ENCODE measurements at regions of chr11 and their contacts with region 1.

Region 1: GRCh38 chr11:7688238-7688826 is 15.0 kb upstream of the CYB5R2 start:
- DNase-seq: peak in 1 of 2 donors; percentile 68
- H3K4me3 ChIP-seq: no peak overlapping the region
- H3K27ac ChIP-seq: no peak overlapping the region
- H3K4me1 ChIP-seq: no peaks in the 10 kb centered on the region
- H3K27me3 ChIP-seq: no peaks in the 10 kb centered on the region
- CTCF ChIP-seq: peak in 5 of 7 experiments; percentile 44 to 89 (median 81)
- EP300 ChIP-seq: no peak
- POLR2A ChIP-seq: no peak

Region 2: DNA sequence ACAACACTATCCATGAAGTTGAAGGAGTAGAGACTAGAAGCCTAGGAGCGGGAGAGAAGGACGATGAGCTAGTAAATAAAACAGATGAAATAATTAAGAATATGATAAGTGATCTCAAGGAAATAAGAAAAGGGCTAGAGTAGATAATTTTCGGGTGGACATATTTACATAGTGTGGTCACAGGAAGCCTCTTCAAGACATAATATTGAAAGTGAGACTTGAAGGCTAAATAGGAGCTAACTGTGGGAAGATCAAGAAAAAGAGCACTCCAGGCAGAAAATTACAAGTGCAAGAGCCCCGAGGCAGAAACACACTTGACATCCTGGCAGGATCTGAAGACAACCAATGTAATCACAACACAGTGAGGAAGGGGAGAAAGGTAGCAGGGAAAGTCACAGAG is 186.4 kb before region 1 on chr11:
- intact Hi-C with region 1: loop called (anchors 10 kb)
- DNase-seq: no peak
- H3K4me3 ChIP-seq: no peak overlapping the region
- H3K27ac ChIP-seq: no peak overlapping the region
- H3K4me1 ChIP-seq: no peaks in the 10 kb centered on the region
- H3K27me3 ChIP-seq: no peaks in the 10 kb centered on the region
- CTCF ChIP-seq: no peak
- EP300 ChIP-seq: no peak
- POLR2A ChIP-seq: no peak

Region 3: DNA sequence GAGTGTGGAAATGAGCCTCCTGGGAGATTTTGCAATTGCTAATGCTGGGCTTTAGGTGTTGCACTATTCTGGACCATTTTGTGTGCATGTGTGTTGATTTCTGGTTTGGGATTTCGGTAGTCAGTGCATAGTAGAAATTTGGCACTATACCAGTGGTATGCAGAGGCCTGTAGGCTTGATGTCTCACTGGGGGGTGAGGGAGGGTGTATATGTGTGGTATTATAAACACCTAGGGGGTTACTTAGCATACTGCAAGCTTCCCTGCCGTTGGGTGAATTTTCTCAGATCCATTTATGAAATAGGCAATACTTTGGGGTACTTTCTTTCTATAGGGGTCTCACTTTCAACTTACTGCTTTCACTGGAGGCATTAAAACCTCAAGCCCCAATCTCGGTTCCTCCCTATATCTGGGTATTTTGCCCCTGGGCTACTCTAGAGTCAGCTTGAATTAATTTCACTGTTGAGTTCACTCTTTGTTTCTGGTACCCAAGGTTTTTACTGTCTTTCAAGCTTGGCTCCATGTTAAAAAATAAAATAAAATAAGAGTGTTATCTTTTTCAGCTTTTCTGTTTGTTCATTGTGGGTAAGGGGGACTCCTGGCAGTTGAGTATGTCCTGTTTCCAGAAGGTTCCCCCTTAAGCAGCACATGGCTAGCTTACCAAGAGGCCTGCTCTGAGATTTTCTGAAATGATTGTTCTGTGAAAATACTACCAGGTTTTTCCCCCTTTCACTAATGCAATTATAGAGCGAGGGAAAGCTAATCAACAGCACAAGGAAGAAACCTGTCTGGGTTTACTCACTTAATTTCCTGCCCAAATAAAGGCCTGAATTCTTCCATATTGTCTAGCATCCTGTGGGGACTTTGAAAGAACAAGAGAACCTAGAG is 128.7 kb before region 1 on chr11:
- intact Hi-C with region 1: loop called (anchors 10 kb)
- DNase-seq: no peak
- H3K4me3 ChIP-seq: no peak overlapping the region
- H3K27ac ChIP-seq: no peak overlapping the region
- H3K4me1 ChIP-seq: peaks cover under 1 to 16% (median 9%) of the 10 kb centered on the region in 4 donors
- H3K27me3 ChIP-seq: no peaks in the 10 kb centered on the region
- CTCF ChIP-seq: no peak
- EP300 ChIP-seq: no peak
- POLR2A ChIP-seq: no peak

Region 4: GRCh38 chr11:8717876-8718753 is 1029.8 kb after region 1 on chr11:
- intact Hi-C with region 1: no loop called
- DNase-seq: peak; percentile 70 to 75
- H3K4me3 ChIP-seq: no peak overlapping the region
- H3K27ac ChIP-seq: peak overlapping the region; percentile 87 to 94 (median 89)
- H3K4me1 ChIP-seq: peaks cover 80 to 99% (median 88%) of the 10 kb centered on the region in 4 donors
- H3K27me3 ChIP-seq: no peaks in the 10 kb centered on the region
- CTCF ChIP-seq: no peak
- EP300 ChIP-seq: no peak
- POLR2A ChIP-seq: no peak